ENCODE measurements at regions of chr4 and their contacts with region 1.

Region 1: GRCh38 chr4:154551872-154552686 is 1.9 kb upstream of the PLRG1 start:
- DNase-seq: peak; percentile 59 to 78 (median 71)
- H3K4me3 ChIP-seq: no peak overlapping the region
- H3K27ac ChIP-seq: no peak overlapping the region
- H3K4me1 ChIP-seq: peaks cover 4% of the 10 kb centered on the region
- H3K27me3 ChIP-seq: no peaks in the 10 kb centered on the region
- CTCF ChIP-seq: peak; percentile 51 to 68 (median 57)
- EP300 ChIP-seq: no peak
- POLR2A ChIP-seq: no peak

Region 2: GRCh38 chr4:154218051-154218450 is 334.0 kb before region 1 on chr4:
- intact Hi-C with region 1: no loop called
- DNase-seq: no peak
- H3K4me3 ChIP-seq: no peak overlapping the region
- H3K27ac ChIP-seq: no peak overlapping the region
- H3K4me1 ChIP-seq: no peaks in the 10 kb centered on the region
- H3K27me3 ChIP-seq: no peaks in the 10 kb centered on the region
- CTCF ChIP-seq: no peak
- EP300 ChIP-seq: no peak
- POLR2A ChIP-seq: no peak

Region 3: DNA sequence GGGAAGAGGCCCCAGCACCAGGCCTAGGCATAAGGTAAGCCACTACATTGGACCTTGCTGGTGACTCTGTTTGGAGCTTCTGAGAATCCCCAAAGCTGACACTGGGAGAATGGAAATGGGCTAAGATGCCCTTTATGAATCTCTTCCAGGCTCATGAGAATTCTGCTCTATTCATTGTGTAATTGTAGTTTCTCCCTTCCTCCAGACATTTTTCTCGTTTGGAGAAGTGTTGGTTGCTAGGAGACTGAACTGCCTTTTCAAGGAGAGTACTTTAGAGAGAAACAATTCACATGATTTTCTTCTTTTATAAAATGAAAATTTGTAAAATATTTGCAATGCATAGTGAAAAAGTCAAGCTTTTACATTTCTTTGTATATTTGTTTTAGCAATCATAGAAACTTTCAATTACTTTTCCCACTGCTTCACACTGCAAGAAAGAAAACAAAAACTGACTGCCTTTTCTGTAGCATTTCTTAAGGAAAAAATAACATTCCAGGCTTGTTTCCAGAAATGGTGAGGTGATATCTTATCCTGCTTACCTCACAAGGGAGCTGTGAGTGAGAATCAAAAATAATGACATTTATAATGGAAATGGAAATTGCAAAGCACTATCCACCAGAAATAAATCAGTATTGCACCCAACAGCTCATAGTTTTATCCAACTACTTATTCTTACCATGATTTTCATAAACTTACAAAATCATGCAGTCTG is 35.6 kb before region 1 on chr4:
- intact Hi-C with region 1: no loop called
- DNase-seq: no peak
- H3K4me3 ChIP-seq: no peak overlapping the region
- H3K27ac ChIP-seq: no peak overlapping the region
- H3K4me1 ChIP-seq: no peaks in the 10 kb centered on the region
- H3K27me3 ChIP-seq: no peaks in the 10 kb centered on the region
- CTCF ChIP-seq: no peak
- EP300 ChIP-seq: no peak
- POLR2A ChIP-seq: no peak

Region 4: DNA sequence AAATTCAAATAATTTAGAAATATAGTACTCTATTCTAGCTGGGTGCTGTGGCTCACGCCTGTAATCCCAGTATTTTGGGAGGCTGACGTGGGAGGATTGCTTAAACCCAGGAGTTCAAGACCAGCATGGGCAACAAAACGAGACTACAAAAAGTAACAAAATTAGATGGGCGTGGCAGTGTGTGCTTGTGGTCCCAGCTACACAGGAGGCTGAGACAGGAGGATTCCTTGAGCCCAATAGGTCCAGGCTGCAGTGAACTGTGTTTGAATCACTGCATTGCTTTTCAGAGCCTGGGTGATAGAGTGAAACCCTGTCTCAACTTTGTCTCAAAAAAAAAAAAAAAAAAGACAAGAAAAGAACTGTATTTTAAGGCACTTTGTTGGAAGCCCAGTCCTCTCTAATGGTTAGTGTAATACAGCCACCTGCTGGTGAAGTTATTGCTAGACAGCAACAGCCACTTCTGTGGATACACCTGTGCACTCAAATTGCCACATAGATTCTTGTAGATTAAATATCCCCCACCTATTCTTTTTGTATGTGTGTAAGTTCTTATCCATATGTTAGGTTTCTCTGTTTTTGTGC is 70.4 kb after region 1 on chr4:
- intact Hi-C with region 1: loop called in 1 of 4 experiments (anchors 5 kb)
- DNase-seq: no peak
- H3K4me3 ChIP-seq: no peak overlapping the region
- H3K27ac ChIP-seq: no peak overlapping the region
- H3K4me1 ChIP-seq: no peaks in the 10 kb centered on the region
- H3K27me3 ChIP-seq: no peaks in the 10 kb centered on the region
- CTCF ChIP-seq: peak in 2 of 3 donors; percentile 12 to 42
- EP300 ChIP-seq: no peak
- POLR2A ChIP-seq: no peak